ENCODE measurements at regions of chr17 and their contacts with region 1.

Region 1: DNA sequence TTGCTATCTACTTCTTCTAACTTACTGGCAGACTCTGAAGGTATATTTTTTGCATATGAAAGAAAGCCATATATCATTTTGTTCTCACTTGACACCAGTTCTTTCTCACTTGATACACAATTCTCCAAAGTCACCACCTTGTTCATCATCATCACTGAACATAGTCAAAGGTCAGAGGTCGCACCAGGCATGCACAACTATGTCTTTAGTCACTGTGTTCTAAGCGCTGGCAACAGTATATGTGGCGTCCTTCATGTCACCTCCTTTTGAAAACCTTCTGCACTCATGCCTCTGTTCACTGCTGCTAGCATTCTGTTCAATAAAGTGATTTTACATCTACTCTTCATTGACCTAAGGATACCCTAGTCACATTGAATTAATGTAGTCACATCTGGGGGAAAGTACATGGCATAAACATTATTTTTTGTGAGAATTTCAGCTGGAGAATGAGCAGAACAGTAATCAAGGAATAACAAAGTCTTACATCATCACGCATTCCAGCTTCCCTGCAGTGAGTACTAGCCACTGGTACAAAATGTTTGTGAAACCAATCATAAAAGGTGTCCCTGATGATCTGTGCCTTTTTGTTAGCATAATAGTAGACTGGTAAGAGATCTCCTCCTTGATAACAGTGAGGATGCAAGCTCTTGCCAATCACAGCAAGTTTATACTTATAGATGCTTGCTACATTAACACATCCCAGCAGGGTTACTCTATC is 20.5 kb upstream of the TBX4 start:
- DNase-seq: no peak
- ATAC-seq: no peak
- H3K4me3 ChIP-seq: no peak overlapping the region
- H3K27ac ChIP-seq: no peak overlapping the region
- H3K4me1 ChIP-seq: no peaks in the 10 kb centered on the region
- H3K27me3 ChIP-seq: peaks cover 0 to 27% (median 7%) of the 10 kb centered on the region in 7 donors
- CTCF ChIP-seq: no peak

Region 2: GRCh38 chr17:61361084-61361483 is 70.7 kb before region 1 on chr17:
- intact Hi-C with region 1: no loop called
- DNase-seq: no peak
- ATAC-seq: no peak
- H3K4me3 ChIP-seq: no peak overlapping the region
- H3K27ac ChIP-seq: no peak overlapping the region
- H3K4me1 ChIP-seq: peaks cover 0 to 6% (median 0%) of the 10 kb centered on the region in 9 donors
- H3K27me3 ChIP-seq: peaks cover 0 to 21% (median 0%) of the 10 kb centered on the region in 7 donors
- CTCF ChIP-seq: no peak

Region 3: GRCh38 chr17:61536436-61536955 is 104.7 kb after region 1 on chr17:
- intact Hi-C with region 1: loop called in 2 of 10 experiments (anchors 10 kb)
- DNase-seq: no peak
- ATAC-seq: no peak
- H3K4me3 ChIP-seq: no peak overlapping the region
- H3K27ac ChIP-seq: no peak overlapping the region
- H3K4me1 ChIP-seq: no peaks in the 10 kb centered on the region
- H3K27me3 ChIP-seq: peaks cover 0 to 4% (median 0%) of the 10 kb centered on the region in 7 donors
- CTCF ChIP-seq: no peak

Region 4: GRCh38 chr17:61543786-61544415 is 112.1 kb after region 1 on chr17:
- intact Hi-C with region 1: loop called in 2 of 10 experiments (anchors 10 kb)
- DNase-seq: no peak
- ATAC-seq: no peak
- H3K4me3 ChIP-seq: no peak overlapping the region
- H3K27ac ChIP-seq: no peak overlapping the region
- H3K4me1 ChIP-seq: no peaks in the 10 kb centered on the region
- H3K27me3 ChIP-seq: peaks cover 0 to 27% (median 2%) of the 10 kb centered on the region in 7 donors
- CTCF ChIP-seq: no peak